Psoas muscle (tissue), 8 donors: ENCODE measurements at regions of chr1 and their contacts with region 1.

Region 1: GRCh38 chr1:153094426-153094825 is at the start of gene SPRR2E:
- DNase-seq: no peak
- ATAC-seq: no peak
- H3K4me3 ChIP-seq: no peak within 1 kb of the TSS
- H3K27ac ChIP-seq: no peak within 1 kb of the TSS
- H3K4me1 ChIP-seq: no peaks in the 10 kb centered on the region
- H3K27me3 ChIP-seq: no peaks in the 10 kb centered on the region
- CTCF ChIP-seq: no peak
- total RNA-seq, gene SPRR2E: not detected

Region 2: GRCh38 chr1:152745289-152745704 is 349.1 kb before region 1 on chr1:
- intact Hi-C with region 1: no loop called
- DNase-seq: no peak
- ATAC-seq: no peak
- H3K4me3 ChIP-seq: no peak overlapping the region
- H3K27ac ChIP-seq: no peak overlapping the region
- H3K4me1 ChIP-seq: no peaks in the 10 kb centered on the region
- H3K27me3 ChIP-seq: no peaks in the 10 kb centered on the region
- CTCF ChIP-seq: no peak

Region 3: DNA sequence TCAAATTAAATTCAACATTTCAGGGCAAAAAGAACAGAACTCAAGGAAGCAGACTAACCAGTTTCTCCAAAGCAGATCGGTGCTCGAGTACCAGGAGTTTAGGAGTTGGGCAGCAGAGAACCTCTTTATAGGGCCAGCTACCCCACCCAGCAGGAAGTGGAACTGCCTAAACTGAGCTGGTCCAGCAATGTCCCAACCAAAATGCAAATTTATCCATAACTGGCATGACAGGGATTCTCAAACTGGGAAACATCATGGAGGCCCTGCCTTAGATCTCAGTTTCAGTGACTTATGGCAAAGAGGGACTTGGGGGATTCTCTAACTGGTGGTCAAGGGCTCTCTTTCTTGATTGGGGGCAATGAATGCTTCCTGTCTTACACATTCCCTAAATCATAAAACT is 22.9 kb before region 1 on chr1 and contains the start of gene SPRR2B:
- intact Hi-C with region 1: loop called in 1 of 2 experiments (anchors 1 kb)
- DNase-seq: no peak
- ATAC-seq: no peak
- H3K4me3 ChIP-seq: no peak within 1 kb of the TSS
- H3K27ac ChIP-seq: no peak within 1 kb of the TSS
- H3K4me1 ChIP-seq: no peaks in the 10 kb centered on the region
- H3K27me3 ChIP-seq: no peaks in the 10 kb centered on the region
- CTCF ChIP-seq: no peak
- total RNA-seq, gene SPRR2B: not detected